ENCODE measurements at regions of chr14 and their contacts with region 1.

Region 1: GRCh38 chr14:64387694-64388532 is at the start of gene MTHFD1:
- DNase-seq: peak; percentile 98
- H3K4me3 ChIP-seq: peak within 1 kb of the TSS; percentile 85
- H3K27ac ChIP-seq: peak within 1 kb of the TSS; percentile 78
- H3K4me1 ChIP-seq: peaks cover 26% of the 10 kb centered on the region
- CTCF ChIP-seq: no peak
- total RNA-seq, gene MTHFD1: 73.7 and 100 TPM in 2 replicates

Region 2: GRCh38 chr14:64294672-64295413 is 93.1 kb before region 1 on chr14:
- CTCF ChIA-PET with region 1: no interaction called
- POLR2A ChIA-PET with region 1: no interaction called
- intact Hi-C with region 1: no loop called
- DNase-seq: peak; percentile 90
- H3K4me3 ChIP-seq: peak overlapping the region; percentile 45
- H3K27ac ChIP-seq: no peak overlapping the region
- H3K4me1 ChIP-seq: peaks cover 28% of the 10 kb centered on the region
- CTCF ChIP-seq: peak; percentile 98

Region 3: DNA sequence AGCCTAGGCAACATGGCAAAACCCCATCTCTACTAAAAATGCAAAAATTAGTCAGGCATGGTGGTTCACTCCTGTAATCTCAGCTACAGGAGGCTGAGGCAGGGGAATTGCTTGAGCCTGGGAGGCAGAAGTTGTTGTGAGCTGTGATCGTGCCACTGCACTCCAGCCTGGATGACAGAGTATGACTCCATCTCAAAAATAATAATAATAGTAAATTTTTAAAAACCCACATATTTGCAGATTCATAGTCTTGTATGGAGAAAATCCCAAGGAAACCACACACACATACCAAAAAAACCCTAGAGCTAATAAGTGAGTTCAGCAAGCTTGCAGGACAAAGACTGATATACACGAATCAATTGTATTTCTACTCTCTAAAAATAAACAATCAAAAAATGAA is 18.7 kb before region 1 on chr14:
- CTCF ChIA-PET with region 1: no interaction called
- POLR2A ChIA-PET with region 1: interaction called, 17 read pairs
- intact Hi-C with region 1: no loop called
- DNase-seq: no peak
- H3K4me3 ChIP-seq: no peak overlapping the region
- H3K27ac ChIP-seq: no peak overlapping the region
- H3K4me1 ChIP-seq: no peaks in the 10 kb centered on the region
- CTCF ChIP-seq: no peak

Region 4: DNA sequence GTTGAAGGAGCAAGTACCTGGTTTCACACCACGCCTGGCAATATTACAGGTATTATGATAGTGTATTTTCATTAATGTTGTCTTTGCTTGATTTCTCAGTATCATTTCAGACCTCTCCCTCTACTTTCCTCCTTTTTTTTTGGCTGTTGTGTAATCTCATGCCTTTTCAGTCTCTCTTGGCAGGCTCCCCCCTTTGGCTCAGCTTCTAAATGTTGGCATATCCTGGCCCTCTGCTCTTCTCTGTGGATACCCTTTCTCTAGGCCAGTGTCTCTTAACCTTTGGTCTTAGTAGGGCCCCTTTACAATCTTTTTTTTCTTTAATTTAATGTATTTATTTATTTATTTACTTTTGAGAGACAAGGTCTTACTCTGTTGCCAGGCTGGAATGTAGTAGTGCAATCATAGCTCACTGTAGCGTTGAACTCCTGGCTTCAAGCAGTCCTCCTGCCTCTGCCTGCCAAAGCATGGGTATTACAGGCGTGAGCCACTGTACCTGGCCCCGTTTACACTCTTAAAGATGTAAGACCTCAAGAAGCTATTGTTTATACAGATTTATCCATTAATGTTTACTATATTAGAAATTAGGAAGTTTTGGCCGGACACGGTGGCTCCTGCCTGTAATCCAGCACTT is 13.0 kb after region 1 on chr14:
- CTCF ChIA-PET with region 1: interaction called, 3 read pairs
- POLR2A ChIA-PET with region 1: interaction called, 15 read pairs
- intact Hi-C with region 1: no loop called
- DNase-seq: no peak
- H3K4me3 ChIP-seq: no peak overlapping the region
- H3K27ac ChIP-seq: no peak overlapping the region
- H3K4me1 ChIP-seq: no peaks in the 10 kb centered on the region
- CTCF ChIP-seq: no peak

Measured in OCI-LY7 (cell line).